ENCODE measurements at regions of chr17 and their contacts with region 1.

Region 1: DNA sequence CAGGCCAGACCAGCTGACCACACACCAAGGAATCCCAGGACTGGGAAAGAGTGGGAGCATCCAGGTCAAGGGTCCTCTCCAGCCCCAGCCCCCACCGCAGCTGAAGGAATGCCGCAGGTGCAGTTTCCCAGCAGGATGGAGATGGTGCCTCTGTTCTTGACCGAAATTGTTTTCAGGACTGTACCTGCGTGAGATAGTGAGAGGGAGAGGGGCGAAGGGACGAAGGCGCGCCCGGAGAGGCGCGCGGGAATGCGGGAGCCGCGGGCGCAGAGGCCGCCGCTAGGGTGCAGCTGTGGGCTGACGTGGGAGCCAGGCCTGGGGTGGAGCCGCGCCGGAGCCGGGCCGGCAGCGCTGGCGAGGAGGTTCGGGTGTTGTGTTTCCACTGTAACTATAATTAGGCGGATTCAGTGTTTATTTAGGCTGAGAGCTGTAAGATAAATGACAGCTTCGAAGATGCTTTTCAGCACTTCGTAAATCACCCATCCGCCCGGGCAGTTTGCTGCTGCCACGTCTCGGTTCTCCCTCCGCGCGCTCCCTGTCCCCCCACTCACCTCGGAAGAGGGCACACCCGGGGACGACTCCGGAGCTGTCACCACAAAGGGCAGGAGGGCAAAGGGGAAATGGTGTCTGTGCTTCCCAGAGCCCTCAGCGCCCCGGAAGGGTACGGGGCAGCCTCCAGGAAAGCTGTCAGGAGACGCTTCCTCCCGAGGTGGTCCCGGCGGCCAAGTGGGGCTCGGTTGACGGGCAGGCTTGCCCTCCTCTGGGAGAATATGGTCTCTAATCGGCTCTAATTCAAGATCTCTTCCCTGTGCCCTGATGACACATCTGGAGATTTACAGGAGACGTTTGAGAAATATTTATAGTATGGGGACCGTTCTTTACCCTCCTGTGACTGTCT is 38.2 kb downstream of the HOXB1 start:
- DNase-seq: peak; percentile 54 to 63 (median 58)
- H3K4me3 ChIP-seq: peak overlapping the region in 1 of 2 donors; percentile 38
- H3K4me3 Mint-ChIP-seq: peak overlapping the region; percentile 35 to 76 (median 56)
- H3K27ac ChIP-seq: no peak overlapping the region
- H3K27ac Mint-ChIP-seq: no peak overlapping the region
- H3K4me1 ChIP-seq: peaks cover 22% of the 10 kb centered on the region
- H3K4me1 Mint-ChIP-seq: peaks cover 6 to 21% (median 11%) of the 10 kb centered on the region in 4 donors
- H3K27me3 ChIP-seq: no peaks in the 10 kb centered on the region
- H3K27me3 Mint-ChIP-seq: peaks cover 1 to 6% of the 10 kb centered on the region in 2 donors

Region 2: DNA sequence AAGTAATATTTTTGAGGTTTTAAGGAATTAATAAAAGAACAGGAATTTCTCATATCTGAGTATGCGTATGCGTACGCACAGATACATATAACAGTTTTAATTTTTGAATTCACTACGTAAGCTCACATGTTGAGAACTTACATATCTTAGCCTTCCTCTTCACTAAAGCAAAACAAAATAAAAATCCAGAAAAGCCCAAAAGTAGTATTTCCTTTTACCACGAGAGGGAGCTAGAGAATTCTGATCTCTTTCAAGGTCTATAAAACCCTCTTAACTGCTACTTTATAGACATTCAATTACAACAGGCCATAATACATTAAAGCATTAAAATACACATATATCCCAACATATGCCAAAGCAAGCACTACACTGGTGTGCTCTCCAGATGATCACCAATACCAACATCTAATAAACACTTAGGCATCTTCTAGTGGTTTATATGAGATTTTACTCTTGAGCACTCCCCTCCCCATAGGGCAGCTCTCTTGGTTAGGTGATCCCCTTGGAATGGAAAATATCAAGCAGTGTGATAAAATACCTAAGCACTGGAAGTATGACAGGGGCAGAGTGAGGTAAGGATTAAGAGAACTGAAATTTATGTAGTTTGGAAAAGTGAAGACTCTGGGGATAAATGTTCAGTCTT is 156.7 kb before region 1 on chr17:
- CTCF ChIA-PET with region 1: interaction called, 25 read pairs
- POLR2A ChIA-PET with region 1: no interaction called
- intact Hi-C with region 1: no loop called
- DNase-seq: peak in 4 of 5 donors; percentile 61 to 70 (median 66)
- H3K4me3 ChIP-seq: no peak overlapping the region
- H3K4me3 Mint-ChIP-seq: no peak overlapping the region
- H3K27ac ChIP-seq: no peak overlapping the region
- H3K27ac Mint-ChIP-seq: peak overlapping the region in 2 of 7 donors; percentile 63 to 65
- H3K4me1 ChIP-seq: no peaks in the 10 kb centered on the region
- H3K4me1 Mint-ChIP-seq: peaks cover 0 to 11% (median 4%) of the 10 kb centered on the region in 4 donors
- H3K27me3 ChIP-seq: no peaks in the 10 kb centered on the region
- H3K27me3 Mint-ChIP-seq: no peaks in the 10 kb centered on the region

Region 3: GRCh38 chr17:48505787-48506645 is 13.4 kb after region 1 on chr17:
- CTCF ChIA-PET with region 1: interaction called, 29 read pairs
- POLR2A ChIA-PET with region 1: interaction called, 6 read pairs
- intact Hi-C with region 1: no loop called
- DNase-seq: peak; percentile 35 to 90 (median 59)
- H3K4me3 ChIP-seq: no peak overlapping the region
- H3K4me3 Mint-ChIP-seq: no peak overlapping the region
- H3K27ac ChIP-seq: no peak overlapping the region
- H3K27ac Mint-ChIP-seq: peak overlapping the region; percentile 20 to 84 (median 65)
- H3K4me1 ChIP-seq: peaks cover 12% of the 10 kb centered on the region
- H3K4me1 Mint-ChIP-seq: peaks cover 11 to 18% (median 15%) of the 10 kb centered on the region in 4 donors
- H3K27me3 ChIP-seq: no peaks in the 10 kb centered on the region
- H3K27me3 Mint-ChIP-seq: peaks cover 0 to 1% of the 10 kb centered on the region in 2 donors

Region 4: DNA sequence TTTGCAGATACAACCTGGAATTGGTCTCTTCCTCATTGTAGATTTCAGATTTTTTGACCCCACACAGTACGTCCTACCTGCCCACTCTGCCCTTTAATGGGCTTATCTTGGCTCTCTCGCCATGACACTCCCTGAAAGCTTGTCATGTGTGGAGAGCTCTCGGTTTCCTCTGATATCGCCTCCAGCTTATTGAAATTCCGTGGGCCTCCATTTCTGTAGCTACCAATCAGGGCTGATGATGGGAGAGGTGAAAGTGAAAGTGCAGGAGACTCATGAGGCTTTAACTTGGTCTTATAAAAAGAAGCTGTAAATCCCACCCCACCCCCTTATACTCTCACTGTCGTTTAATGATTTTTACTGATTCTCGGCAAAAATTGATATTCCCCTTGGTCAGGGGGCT is 20.4 kb after region 1 on chr17:
- CTCF ChIA-PET with region 1: interaction called, 10 read pairs
- POLR2A ChIA-PET with region 1: interaction called, 6 read pairs
- intact Hi-C with region 1: no loop called
- DNase-seq: peak in 1 of 5 donors; percentile 10
- H3K4me3 ChIP-seq: no peak overlapping the region
- H3K4me3 Mint-ChIP-seq: peak overlapping the region in 7 of 8 donors; percentile 18 to 81 (median 69)
- H3K27ac ChIP-seq: no peak overlapping the region
- H3K27ac Mint-ChIP-seq: peak overlapping the region in 6 of 7 donors; percentile 37 to 84 (median 80)
- H3K4me1 ChIP-seq: peaks cover 21% of the 10 kb centered on the region
- H3K4me1 Mint-ChIP-seq: peaks cover 14 to 31% (median 16%) of the 10 kb centered on the region in 4 donors
- H3K27me3 ChIP-seq: no peaks in the 10 kb centered on the region
- H3K27me3 Mint-ChIP-seq: peaks cover 3 to 10% of the 10 kb centered on the region in 2 donors

Region 5: DNA sequence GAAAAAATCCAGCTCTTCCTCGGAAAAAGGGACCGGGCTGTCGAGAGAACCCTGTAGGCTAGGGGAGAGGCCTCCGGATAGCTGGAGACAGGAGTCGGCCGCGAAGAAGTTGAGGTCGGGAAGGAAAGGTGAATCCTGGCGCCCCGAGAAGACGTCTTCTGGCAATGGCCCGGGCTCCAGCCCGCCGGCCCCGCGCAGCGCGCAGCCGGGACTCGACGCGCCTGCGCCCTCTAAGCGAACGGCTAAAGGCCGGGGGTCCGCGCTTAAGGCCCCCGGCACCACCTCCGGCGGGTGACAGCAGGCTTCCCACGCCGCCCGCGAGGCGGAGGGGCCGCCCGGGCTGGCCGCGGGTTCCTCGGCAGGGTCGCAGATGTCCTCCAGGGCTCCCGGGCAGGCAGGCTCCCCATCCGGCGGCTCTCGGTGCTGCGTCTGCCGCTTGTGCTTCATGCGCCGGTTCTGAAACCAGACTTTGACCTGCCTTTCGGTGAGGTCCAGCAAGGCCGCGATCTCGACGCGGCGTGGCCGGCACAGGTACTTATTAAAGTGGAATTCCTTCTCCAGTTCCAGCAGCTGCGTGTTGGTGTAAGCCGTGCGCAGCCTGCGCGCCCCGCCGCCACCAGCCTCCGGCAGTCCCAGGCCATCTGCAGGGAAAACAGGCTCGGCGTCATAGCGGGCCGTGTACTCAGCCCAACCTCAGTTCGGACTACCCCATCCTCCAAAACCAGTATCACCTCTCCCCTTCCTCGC is 50.6 kb after region 1 on chr17:
- CTCF ChIA-PET with region 1: interaction called, 8 read pairs
- POLR2A ChIA-PET with region 1: interaction called, 11 read pairs
- intact Hi-C with region 1: loop called (anchors 5 kb)
- DNase-seq: peak; percentile 51 to 66 (median 61)
- H3K4me3 ChIP-seq: peak overlapping the region; percentile 74 to 86
- H3K4me3 Mint-ChIP-seq: peak overlapping the region; percentile 94 to 100 (median 99)
- H3K27ac ChIP-seq: peak overlapping the region; percentile 86
- H3K27ac Mint-ChIP-seq: peak overlapping the region; percentile 87 to 99 (median 97)
- H3K4me1 ChIP-seq: peaks cover 28% of the 10 kb centered on the region
- H3K4me1 Mint-ChIP-seq: peaks cover 13 to 75% (median 41%) of the 10 kb centered on the region in 4 donors
- H3K27me3 ChIP-seq: no peaks in the 10 kb centered on the region
- H3K27me3 Mint-ChIP-seq: peaks cover 6 to 7% of the 10 kb centered on the region in 2 donors

Region 6: GRCh38 chr17:48586355-48587258 is 94.0 kb after region 1 on chr17:
- CTCF ChIA-PET with region 1: interaction called, 46 read pairs
- POLR2A ChIA-PET with region 1: interaction called, 6 read pairs
- intact Hi-C with region 1: no loop called
- DNase-seq: no peak
- H3K4me3 ChIP-seq: peak overlapping the region; percentile 73 to 98
- H3K4me3 Mint-ChIP-seq: peak overlapping the region; percentile 90 to 97 (median 94)
- H3K27ac ChIP-seq: no peak overlapping the region
- H3K27ac Mint-ChIP-seq: peak overlapping the region in 3 of 7 donors; percentile 11 to 82 (median 69)
- H3K4me1 ChIP-seq: peaks cover 29% of the 10 kb centered on the region
- H3K4me1 Mint-ChIP-seq: peaks cover 12 to 46% (median 29%) of the 10 kb centered on the region in 4 donors
- H3K27me3 ChIP-seq: peaks cover 34% of the 10 kb centered on the region
- H3K27me3 Mint-ChIP-seq: peaks cover 49 to 70% of the 10 kb centered on the region in 2 donors

Measured in CD4-positive, alpha-beta memory T cell (primary cell).